Activated CD8-positive, alpha-beta T cell treated with anti-CD3 and anti-CD28 coated beads for 36 hours (primary cell): ENCODE measurements at regions of chr1 and their contacts with region 1.

Region 1: DNA sequence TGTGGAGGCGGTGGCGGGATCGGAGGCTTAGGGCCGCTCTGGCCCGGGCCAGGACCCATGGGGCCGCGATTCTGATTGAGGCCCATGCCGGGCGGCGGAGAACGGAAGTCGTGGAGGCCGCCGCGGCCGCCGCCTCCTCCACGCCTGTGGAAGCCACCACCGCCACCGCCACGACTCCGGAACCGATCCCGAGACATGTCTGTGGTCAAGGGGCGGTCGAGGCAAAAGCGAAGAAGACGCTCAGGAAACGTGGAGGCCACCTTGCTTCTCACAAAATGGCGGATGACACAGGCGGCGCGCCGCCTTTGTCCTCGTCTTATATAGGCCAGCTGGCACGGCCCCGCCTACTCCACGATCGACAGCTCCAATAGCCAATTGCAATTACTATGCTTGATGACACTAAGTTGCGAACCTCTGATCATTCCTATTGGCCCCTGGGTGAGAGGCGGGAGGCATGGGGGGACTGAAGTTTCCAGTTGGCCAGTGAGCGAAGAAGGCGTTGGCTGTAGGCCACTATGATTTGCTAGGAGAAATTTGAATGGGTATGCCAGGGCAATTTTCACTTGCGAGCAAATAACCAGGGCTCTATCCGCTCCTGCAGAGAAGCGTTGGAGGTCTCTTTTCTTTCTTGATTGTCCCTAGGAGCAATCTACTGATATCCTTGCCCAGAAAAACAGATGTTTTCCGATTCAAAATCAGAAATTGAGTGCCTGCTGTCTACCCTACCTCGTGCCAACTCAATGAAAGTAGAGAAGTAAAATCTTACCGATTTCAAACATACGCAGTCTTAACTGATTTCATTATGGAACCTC is at the start of gene SFPQ:
- DNase-seq: peak; percentile 97
- ATAC-seq: peak; percentile 93
- H3K4me3 Mint-ChIP-seq: peak within 1 kb of the TSS; percentile 83
- H3K27ac Mint-ChIP-seq: peak within 1 kb of the TSS; percentile 99
- H3K4me1 Mint-ChIP-seq: peaks cover 36% of the 10 kb centered on the region
- H3K27me3 Mint-ChIP-seq: no peaks in the 10 kb centered on the region
- CTCF ChIP-seq: no peak
- total RNA-seq, gene SFPQ: 295 to 297 TPM

Region 2: GRCh38 chr1:35030756-35031446 is 162.2 kb before region 1 on chr1:
- CTCF ChIA-PET with region 1: no interaction called
- POLR2A ChIA-PET with region 1: interaction called, 13 read pairs
- intact Hi-C with region 1: no loop called
- DNase-seq: peak; percentile 71
- ATAC-seq: peak; percentile 68
- H3K4me3 Mint-ChIP-seq: peak overlapping the region; percentile 98
- H3K27ac Mint-ChIP-seq: peak overlapping the region; percentile 95
- H3K4me1 Mint-ChIP-seq: peaks cover 25% of the 10 kb centered on the region
- H3K27me3 Mint-ChIP-seq: no peaks in the 10 kb centered on the region
- CTCF ChIP-seq: no peak

Region 3: GRCh38 chr1:35173909-35174540 is 19.0 kb before region 1 on chr1:
- CTCF ChIA-PET with region 1: interaction called, 3 read pairs
- POLR2A ChIA-PET with region 1: interaction called, 90 read pairs
- intact Hi-C with region 1: no loop called
- DNase-seq: no peak
- ATAC-seq: no peak
- H3K4me3 Mint-ChIP-seq: no peak overlapping the region
- H3K27ac Mint-ChIP-seq: peak overlapping the region; percentile 7
- H3K4me1 Mint-ChIP-seq: peaks cover 8% of the 10 kb centered on the region
- H3K27me3 Mint-ChIP-seq: no peaks in the 10 kb centered on the region
- CTCF ChIP-seq: no peak

Region 4: DNA sequence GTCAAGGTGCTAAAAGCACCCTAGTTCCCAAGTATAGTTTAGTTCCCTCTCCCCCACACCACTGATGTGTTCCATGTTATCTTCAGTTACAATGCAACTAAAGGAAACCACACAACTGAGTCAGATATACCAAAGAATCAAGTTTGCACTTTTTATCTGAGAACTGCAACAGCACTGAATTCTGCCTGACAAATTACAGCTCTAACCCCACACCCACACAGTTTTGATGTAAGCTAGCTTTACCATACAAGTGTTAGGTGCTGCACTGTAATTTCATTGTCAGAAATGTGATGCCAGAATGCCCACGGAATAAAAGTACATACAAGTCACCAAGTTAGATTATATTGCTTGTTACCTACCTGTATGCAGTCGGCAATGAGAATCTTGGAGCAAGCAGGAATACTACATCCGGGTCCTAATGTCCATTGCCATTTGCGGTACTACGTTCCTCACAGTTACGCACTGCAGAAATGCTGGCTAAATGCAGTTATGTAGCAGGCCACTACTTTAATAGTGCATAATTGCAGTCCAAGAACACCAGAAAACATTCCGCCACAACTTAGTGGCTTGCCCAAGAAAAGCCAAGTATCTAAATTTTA is 12.2 kb before region 1 on chr1:
- CTCF ChIA-PET with region 1: interaction called, 3 read pairs
- POLR2A ChIA-PET with region 1: interaction called, 90 read pairs
- intact Hi-C with region 1: no loop called
- DNase-seq: peak; percentile 40
- ATAC-seq: peak; percentile 83
- H3K4me3 Mint-ChIP-seq: peak overlapping the region; percentile 22
- H3K27ac Mint-ChIP-seq: peak overlapping the region; percentile 67
- H3K4me1 Mint-ChIP-seq: peaks cover 74% of the 10 kb centered on the region
- H3K27me3 Mint-ChIP-seq: no peaks in the 10 kb centered on the region
- CTCF ChIP-seq: no peak

Region 5: GRCh38 chr1:35255276-35255675 is 62.2 kb after region 1 on chr1:
- CTCF ChIA-PET with region 1: no interaction called
- POLR2A ChIA-PET with region 1: no interaction called
- intact Hi-C with region 1: no loop called
- DNase-seq: no peak
- ATAC-seq: no peak
- H3K4me3 Mint-ChIP-seq: no peak overlapping the region
- H3K27ac Mint-ChIP-seq: no peak overlapping the region
- H3K4me1 Mint-ChIP-seq: no peaks in the 10 kb centered on the region
- H3K27me3 Mint-ChIP-seq: peaks cover 2% of the 10 kb centered on the region
- CTCF ChIP-seq: no peak

Region 6: DNA sequence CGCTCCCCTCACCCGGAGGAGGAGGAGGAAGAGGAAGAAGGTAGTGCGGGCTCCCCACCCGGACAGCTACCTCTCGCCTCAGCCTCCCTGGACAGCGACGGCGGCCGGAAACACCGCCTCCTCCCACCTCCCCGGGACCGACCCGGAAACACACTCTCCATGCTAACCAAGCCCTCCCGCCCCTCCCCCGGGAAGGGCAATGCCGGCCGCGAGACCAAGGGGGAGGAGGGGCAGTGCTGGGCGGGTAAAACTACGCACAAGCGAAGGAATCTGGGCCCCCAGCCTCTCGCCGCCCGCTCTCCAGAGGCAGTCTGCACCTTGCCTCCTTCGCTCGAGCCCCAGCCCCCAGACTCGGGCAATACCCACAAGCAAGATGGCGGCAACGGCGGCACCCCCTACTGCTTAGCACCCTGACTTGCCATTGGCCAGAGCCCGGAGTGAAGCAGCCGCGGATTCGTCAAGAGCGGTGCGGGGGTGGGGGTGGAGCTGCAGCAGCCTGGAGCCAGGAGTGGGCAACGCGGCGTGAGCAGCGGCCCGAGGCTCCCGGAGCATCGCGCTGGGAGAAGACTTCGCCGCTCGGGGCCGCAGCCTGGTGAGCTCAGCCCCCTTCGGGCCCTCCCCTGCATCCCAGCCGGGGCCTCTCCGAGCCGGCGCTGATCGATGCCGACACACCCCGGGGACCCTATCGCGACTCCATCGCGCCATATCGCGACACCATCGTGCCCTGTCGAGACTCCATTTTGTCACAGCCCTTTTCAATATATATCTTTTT is 364.4 kb after region 1 on chr1 and contains the starts of genes KIAA0319L and NCDN:
- CTCF ChIA-PET with region 1: no interaction called
- POLR2A ChIA-PET with region 1: interaction called, 4 read pairs
- intact Hi-C with region 1: loop called (anchors 10 kb)
- DNase-seq: peak; percentile 99
- ATAC-seq: peak; percentile 91
- H3K4me3 Mint-ChIP-seq: peak within 1 kb of the TSS; percentile 92
- H3K27ac Mint-ChIP-seq: peak within 1 kb of the TSS; percentile 96
- H3K4me1 Mint-ChIP-seq: peaks cover 45% of the 10 kb centered on the region
- H3K27me3 Mint-ChIP-seq: no peaks in the 10 kb centered on the region
- CTCF ChIP-seq: no peak
- total RNA-seq, gene KIAA0319L: 22.8 to 30.9 TPM
- total RNA-seq, gene NCDN: 17.3 to 17.5 TPM